Pancreas (tissue), 10 donors: ENCODE measurements at regions of chr5 and their contacts with region 1.

Region 1: DNA sequence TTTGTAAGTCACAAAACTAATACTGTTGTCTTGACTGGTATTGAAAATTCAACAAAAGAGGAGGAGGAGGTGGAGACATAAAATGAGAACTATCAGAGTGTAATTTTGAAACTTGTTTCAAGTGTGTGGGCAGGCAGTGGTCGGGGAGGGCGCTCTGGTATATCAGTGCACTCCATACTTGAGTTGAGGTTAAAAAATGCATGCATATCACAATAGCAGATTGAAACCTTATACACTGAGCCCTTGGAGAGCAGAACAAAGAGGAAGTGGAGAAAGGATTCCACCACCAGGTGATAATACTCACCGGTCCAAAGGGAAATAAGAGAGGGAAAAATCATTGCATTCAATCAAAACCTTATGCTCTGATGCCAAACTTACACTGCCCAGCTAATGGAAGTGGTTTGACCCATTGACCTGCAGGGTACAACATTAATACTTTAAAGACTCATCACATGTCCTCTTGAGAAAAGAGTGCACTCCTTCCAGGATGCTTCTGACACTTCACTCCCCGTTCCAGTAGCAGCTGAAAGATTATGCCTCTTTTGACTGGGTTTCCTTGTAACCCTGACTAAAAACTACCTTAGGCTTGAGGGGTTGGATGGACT is 79.5 kb upstream of the FAM169A start:
- DNase-seq: no peak
- ATAC-seq: no peak
- H3K4me3 ChIP-seq: no peak overlapping the region
- H3K27ac ChIP-seq: no peak overlapping the region
- H3K4me1 ChIP-seq: peaks cover 7 to 21% (median 18%) of the 10 kb centered on the region in 3 donors
- H3K27me3 ChIP-seq: no peaks in the 10 kb centered on the region
- CTCF ChIP-seq: no peak

Region 2: GRCh38 chr5:75006865-75007822 is 61.5 kb after region 1 on chr5:
- intact Hi-C with region 1: no loop called
- DNase-seq: no peak
- ATAC-seq: no peak
- H3K4me3 ChIP-seq: no peak overlapping the region
- H3K27ac ChIP-seq: no peak overlapping the region
- H3K4me1 ChIP-seq: peaks cover 3 to 6% (median 6%) of the 10 kb centered on the region in 3 donors
- H3K27me3 ChIP-seq: no peaks in the 10 kb centered on the region
- CTCF ChIP-seq: no peak

Region 3: GRCh38 chr5:75049456-75050351 is 104.0 kb after region 1 on chr5:
- intact Hi-C with region 1: loop called in 1 of 3 experiments (anchors 10 kb)
- DNase-seq: peak in 5 of 6 donors; percentile 51 to 72 (median 59)
- ATAC-seq: peak; percentile 22 to 47 (median 36)
- H3K4me3 ChIP-seq: no peak overlapping the region
- H3K27ac ChIP-seq: peak overlapping the region in 1 of 4 donors; percentile 9
- H3K4me1 ChIP-seq: peaks cover 0 to 20% (median 15%) of the 10 kb centered on the region in 3 donors
- H3K27me3 ChIP-seq: no peaks in the 10 kb centered on the region
- CTCF ChIP-seq: peak; percentile 58 to 75 (median 64)